Activated naive CD4-positive, alpha-beta T cell treated with anti-CD3 and anti-CD28 coated beads for 36 hours (primary cell): ENCODE measurements at regions of chr14 and their contacts with region 1.

Region 1: GRCh38 chr14:63044994-63045611 is at the start of gene KCNH5:
- DNase-seq: peak; percentile 6
- H3K4me3 Mint-ChIP-seq: no peak within 1 kb of the TSS
- H3K27ac Mint-ChIP-seq: no peak within 1 kb of the TSS
- H3K4me1 Mint-ChIP-seq: peaks cover 3% of the 10 kb centered on the region
- H3K27me3 Mint-ChIP-seq: peaks cover 36% of the 10 kb centered on the region
- total RNA-seq, gene KCNH5: not detected

Region 2: DNA sequence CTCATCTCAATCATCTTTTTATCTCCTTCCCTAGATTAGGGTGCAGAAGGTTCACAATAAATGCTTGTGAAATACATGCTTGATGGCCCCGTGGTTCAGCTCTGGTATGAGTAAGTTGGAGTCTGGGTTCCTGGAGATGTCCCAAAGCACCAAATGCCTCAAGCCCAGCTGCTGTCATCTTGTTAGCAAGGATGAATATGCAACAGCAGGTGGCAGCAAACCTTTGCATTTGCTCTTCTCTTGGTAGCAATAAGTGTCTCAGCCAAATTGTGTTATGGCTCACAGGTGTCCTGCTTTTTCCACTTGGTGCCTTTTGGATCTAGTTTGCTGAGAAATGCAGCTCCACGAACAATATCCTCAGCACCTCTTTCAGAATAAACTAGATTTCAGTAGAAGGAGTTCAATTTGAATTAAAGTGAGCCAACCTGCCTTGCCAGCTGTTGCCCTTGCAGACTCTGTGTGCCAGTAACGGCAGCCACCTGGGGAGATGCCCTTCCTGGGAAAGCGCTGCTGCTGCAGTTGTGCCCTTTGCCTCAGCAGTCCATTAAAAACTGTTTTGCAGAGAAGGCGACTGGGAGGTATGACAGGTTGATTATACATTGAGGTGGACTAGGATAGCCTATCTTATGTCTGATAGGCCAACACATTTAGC is 865.6 kb before region 1 on chr14:
- CTCF ChIA-PET with region 1: no interaction called
- intact Hi-C with region 1: loop called (anchors 10 kb)
- DNase-seq: peak; percentile 65
- H3K4me3 Mint-ChIP-seq: no peak overlapping the region
- H3K27ac Mint-ChIP-seq: no peak overlapping the region
- H3K4me1 Mint-ChIP-seq: no peaks in the 10 kb centered on the region
- H3K27me3 Mint-ChIP-seq: peaks cover 17% of the 10 kb centered on the region